CD4-positive, alpha-beta memory T cell (primary cell): ENCODE measurements at regions of chr19 and their contacts with region 1.

Region 1: DNA sequence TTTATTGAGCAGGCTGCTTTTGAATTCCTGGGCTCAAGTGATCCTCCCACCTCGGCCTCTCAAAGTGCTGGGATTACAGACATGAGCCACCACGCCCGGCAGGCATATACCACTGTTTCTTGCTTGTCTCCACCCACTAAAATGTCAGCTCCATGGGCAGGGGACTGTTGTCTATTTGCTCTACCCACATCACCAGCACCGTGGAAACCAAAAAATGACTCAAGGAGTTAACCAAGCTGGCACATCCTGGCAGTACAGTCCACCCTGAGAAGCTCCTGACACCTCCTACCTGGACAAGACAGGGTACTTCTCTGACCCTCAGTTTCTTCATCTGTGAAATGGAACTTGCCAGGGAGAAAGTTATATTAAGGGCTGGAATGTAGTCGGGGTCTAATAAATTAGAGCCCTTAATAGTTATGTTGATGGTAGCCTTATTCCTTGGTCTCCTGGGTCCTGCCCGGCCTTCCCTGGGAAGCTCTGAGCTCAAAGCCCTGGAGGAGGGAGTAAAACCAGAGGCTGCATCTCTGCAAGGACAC is 13.9 kb downstream of the RDH8 start:
- DNase-seq: no peak
- H3K4me3 ChIP-seq: no peak overlapping the region
- H3K4me3 Mint-ChIP-seq: no peak overlapping the region
- H3K27ac ChIP-seq: no peak overlapping the region
- H3K27ac Mint-ChIP-seq: no peak overlapping the region
- H3K4me1 ChIP-seq: peaks cover 7% of the 10 kb centered on the region
- H3K4me1 Mint-ChIP-seq: peaks cover 0 to 4% (median 2%) of the 10 kb centered on the region in 4 donors
- H3K27me3 ChIP-seq: peaks cover 8% of the 10 kb centered on the region
- H3K27me3 Mint-ChIP-seq: peaks cover 15 to 18% of the 10 kb centered on the region in 2 donors

Region 2: DNA sequence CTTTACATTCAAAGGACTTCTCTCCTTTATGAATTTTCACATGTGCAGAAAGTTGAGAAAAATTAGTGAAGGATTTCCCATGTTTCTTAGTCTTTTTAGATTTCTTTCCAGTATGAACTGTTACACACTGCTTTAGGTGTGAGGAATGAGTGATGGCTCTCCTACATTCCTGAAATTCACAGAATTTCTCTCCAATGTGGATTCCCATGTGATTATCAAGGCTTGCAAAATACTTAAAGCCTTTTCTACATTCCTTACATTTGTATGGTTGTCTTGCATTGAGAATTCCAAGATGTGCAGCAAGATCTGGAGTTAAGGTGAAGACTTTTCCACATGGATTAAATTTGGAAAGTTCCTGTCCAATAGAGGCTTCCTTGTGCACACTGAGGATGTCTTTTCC is 336.5 kb before region 1 on chr19:
- CTCF ChIA-PET with region 1: no interaction called
- POLR2A ChIA-PET with region 1: no interaction called
- intact Hi-C with region 1: no loop called
- DNase-seq: no peak
- H3K4me3 ChIP-seq: no peak overlapping the region
- H3K4me3 Mint-ChIP-seq: no peak overlapping the region
- H3K27ac ChIP-seq: no peak overlapping the region
- H3K27ac Mint-ChIP-seq: no peak overlapping the region
- H3K4me1 ChIP-seq: no peaks in the 10 kb centered on the region
- H3K4me1 Mint-ChIP-seq: no peaks in the 10 kb centered on the region
- H3K27me3 ChIP-seq: no peaks in the 10 kb centered on the region
- H3K27me3 Mint-ChIP-seq: peaks cover 6 to 12% of the 10 kb centered on the region in 2 donors

Region 3: GRCh38 chr19:10006335-10006708 is 20.9 kb before region 1 on chr19:
- CTCF ChIA-PET with region 1: interaction called, 16 read pairs
- POLR2A ChIA-PET with region 1: no interaction called
- intact Hi-C with region 1: no loop called
- DNase-seq: peak in 3 of 5 donors; percentile 16 to 46 (median 23)
- H3K4me3 ChIP-seq: no peak overlapping the region
- H3K4me3 Mint-ChIP-seq: peak overlapping the region; percentile 17 to 78 (median 58)
- H3K27ac ChIP-seq: no peak overlapping the region
- H3K27ac Mint-ChIP-seq: peak overlapping the region in 3 of 7 donors; percentile 1 to 75 (median 47)
- H3K4me1 ChIP-seq: peaks cover 55% of the 10 kb centered on the region
- H3K4me1 Mint-ChIP-seq: peaks cover 18 to 60% (median 42%) of the 10 kb centered on the region in 4 donors
- H3K27me3 ChIP-seq: peaks cover 16% of the 10 kb centered on the region
- H3K27me3 Mint-ChIP-seq: peaks cover 45 to 48% of the 10 kb centered on the region in 2 donors

Region 4: DNA sequence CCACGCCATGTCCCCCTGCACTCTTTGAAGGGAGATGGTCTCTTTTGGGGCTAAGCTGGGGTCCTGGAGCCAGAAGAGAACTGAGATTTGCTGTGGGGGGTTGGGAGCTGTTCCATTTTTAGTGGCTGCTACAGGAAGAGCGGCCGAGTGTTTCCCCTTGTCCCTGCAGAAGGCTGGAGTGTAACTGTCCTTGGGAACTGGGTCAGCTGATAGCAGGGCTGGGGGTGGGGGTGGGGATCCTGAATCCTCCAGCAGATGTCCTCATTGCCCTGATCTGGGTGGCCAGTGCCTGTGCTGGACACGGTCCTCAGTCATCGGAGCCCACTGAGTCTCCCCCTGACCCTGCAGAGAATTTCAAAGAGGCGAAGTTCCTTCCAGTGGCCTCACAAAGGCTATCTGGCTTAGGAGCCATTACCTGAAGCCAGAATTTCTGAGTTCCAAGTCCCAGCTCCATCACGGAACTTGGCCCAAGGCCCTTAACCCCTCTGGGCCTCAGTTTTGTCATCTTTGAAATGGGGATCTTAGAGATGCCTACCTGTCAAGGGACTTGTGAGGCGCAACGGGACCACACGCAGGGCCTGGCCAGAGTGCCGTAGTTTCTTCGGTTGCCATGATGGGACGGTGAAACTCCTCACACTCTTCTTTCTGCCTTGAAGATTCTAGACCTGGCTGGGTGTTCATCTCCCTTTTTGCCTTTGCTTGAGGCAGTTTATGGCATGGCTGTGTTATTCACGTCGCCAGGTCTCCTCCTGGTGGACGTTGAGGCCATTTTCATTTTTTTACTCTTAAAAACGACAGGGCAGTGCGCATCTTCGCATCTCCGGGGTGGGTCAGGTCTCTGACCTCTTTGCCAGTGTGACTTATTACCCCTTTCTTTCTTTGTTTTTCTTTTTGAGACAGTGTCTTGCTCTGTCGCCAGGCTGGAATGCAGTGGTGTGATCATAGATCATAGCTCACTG is 742.6 kb after region 1 on chr19:
- CTCF ChIA-PET with region 1: no interaction called
- POLR2A ChIA-PET with region 1: no interaction called
- intact Hi-C with region 1: no loop called
- DNase-seq: peak in 3 of 5 donors; percentile 12 to 28 (median 20)
- H3K4me3 ChIP-seq: no peak overlapping the region
- H3K4me3 Mint-ChIP-seq: no peak overlapping the region
- H3K27ac ChIP-seq: no peak overlapping the region
- H3K27ac Mint-ChIP-seq: peak overlapping the region; percentile 29 to 90 (median 60)
- H3K4me1 ChIP-seq: peaks cover 37% of the 10 kb centered on the region
- H3K4me1 Mint-ChIP-seq: peaks cover 10 to 52% (median 20%) of the 10 kb centered on the region in 4 donors
- H3K27me3 ChIP-seq: no peaks in the 10 kb centered on the region
- H3K27me3 Mint-ChIP-seq: no peaks in the 10 kb centered on the region